Cardiac septum (tissue), 1 donor: ENCODE measurements at regions of chr11 and their contacts with region 1.

Region 1: GRCh38 chr11:29452146-29452545 is 564.7 kb downstream of the KCNA4 start:
- DNase-seq: no peak

Region 2: DNA sequence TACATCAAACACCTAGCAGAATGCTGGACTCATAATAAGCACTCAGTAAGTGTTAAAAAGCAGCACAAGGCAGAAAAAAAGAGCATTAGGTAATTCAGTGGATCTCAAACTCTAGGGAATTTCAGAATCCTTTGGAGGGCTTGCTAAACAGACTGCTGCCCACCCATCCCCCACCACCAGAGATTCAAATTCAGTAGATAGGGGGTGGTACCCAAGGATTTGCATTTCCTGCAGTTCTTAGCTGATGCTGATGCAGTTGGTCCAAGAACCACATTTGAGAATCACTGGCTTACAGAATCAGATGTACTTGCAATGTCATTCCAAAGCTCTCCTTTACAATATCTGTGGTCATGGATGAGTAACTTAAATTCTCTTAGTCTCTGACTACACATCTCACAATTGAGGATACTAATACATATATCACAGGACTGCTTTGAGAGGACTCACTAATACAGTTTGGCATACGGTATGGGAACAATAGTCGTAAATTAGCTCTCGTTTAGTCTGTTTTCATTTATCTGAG is 99.8 kb before region 1 on chr11:
- intact Hi-C with region 1: no loop called
- DNase-seq: no peak

Region 3: GRCh38 chr11:29634248-29634647 is 182.1 kb after region 1 on chr11:
- intact Hi-C with region 1: loop called (anchors 10 kb)
- DNase-seq: no peak

Region 4: GRCh38 chr11:29780756-29781155 is 328.6 kb after region 1 on chr11:
- intact Hi-C with region 1: loop called (anchors 10 kb)
- DNase-seq: no peak